ENCODE measurements at regions of chr18 and their contacts with region 1.

Region 1: DNA sequence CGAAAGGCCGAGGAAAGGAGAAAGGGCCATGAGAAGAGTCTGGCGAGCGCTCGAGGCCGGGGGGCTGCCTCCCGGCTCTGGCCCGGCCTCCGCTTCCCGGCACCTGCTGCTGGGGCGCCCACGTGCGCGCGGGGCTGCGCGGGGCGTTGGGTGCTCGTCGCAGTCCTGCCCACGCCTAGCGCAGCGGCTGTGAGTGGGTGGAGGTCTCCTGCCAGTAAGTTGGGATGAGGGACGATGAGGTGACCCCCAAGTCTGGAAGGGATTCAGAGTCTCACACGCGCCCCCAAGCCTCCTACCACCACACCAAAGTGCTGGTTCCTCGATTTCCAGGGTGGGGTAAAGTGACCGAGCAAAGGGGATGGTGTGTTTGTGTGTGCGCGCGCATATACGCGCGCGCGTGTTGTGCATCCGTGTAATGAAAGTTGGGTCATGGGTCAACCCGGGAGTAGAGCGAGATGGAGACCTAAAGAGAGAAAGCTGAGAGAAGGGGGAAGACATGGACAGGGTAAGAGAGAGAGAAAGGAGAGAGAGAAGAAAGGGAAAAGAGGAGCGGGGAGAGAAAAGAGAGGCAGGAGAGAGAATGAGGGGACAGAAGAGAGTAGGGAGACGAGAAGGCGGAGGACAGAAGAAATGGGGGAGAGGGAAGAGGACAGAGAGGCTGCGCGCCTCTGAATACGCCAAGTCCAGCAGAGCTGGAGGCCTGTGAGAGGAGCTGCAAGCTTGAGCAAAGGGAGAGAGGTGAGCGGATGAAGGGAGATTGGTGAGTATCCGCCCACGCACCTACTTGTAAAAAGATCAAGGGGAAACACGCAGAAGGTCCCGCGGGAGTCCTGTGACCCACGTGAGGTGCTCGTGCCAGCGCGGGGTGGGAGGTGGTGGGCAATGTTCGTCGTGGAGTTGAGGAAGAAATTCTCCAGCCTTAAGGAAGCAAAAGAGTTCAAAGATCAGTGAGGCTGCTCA is 1.7 kb upstream of the NETO1 start:
- DNase-seq: no peak
- ATAC-seq: no peak
- H3K4me3 ChIP-seq: no peak overlapping the region
- H3K4me3 Mint-ChIP-seq: no peak overlapping the region
- H3K27ac ChIP-seq: no peak overlapping the region
- H3K27ac Mint-ChIP-seq: no peak overlapping the region
- H3K4me1 ChIP-seq: no peaks in the 10 kb centered on the region
- H3K4me1 Mint-ChIP-seq: no peaks in the 10 kb centered on the region
- H3K27me3 ChIP-seq: peaks cover 16 to 23% of the 10 kb centered on the region in 2 experiments
- H3K27me3 Mint-ChIP-seq: peaks cover 35% of the 10 kb centered on the region
- CTCF ChIP-seq: no peak

Region 2: GRCh38 chr18:72935762-72936161 is 66.3 kb after region 1 on chr18:
- CTCF ChIA-PET with region 1: no interaction called
- POLR2A ChIA-PET with region 1: no interaction called
- intact Hi-C with region 1: loop called in 1 of 2 experiments (anchors 10 kb)
- DNase-seq: no peak
- ATAC-seq: no peak
- H3K4me3 ChIP-seq: no peak overlapping the region
- H3K4me3 Mint-ChIP-seq: no peak overlapping the region
- H3K27ac ChIP-seq: no peak overlapping the region
- H3K27ac Mint-ChIP-seq: no peak overlapping the region
- H3K4me1 ChIP-seq: no peaks in the 10 kb centered on the region
- H3K4me1 Mint-ChIP-seq: no peaks in the 10 kb centered on the region
- H3K27me3 ChIP-seq: no peaks in the 10 kb centered on the region
- H3K27me3 Mint-ChIP-seq: no peaks in the 10 kb centered on the region
- CTCF ChIP-seq: no peak